ENCODE measurements at regions of chr19 and their contacts with region 1.

Region 1: DNA sequence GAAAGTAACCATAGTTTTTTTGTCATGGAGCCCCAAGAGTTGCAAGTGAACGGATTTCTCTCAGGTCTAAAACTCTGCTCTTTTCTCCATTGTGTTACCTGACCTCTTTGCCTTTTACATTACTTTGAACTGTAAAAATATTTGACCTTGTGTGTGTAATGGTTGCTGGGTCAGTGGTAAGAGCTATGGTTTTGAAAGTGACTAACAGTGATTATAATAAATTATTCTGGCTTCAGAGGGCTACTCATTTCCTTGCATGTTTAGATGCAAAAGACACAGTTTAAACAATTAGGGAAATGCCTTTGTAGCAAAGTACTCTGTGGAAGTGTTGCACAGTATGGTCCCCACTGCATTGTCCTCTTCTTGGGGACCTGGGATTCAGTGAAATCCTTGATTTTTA is 29.3 kb upstream of the PSG8 start:
- DNase-seq: peak; percentile 28
- ATAC-seq: peak; percentile 55
- H3K4me3 ChIP-seq: no peak overlapping the region
- H3K27ac ChIP-seq: no peak overlapping the region
- H3K4me1 ChIP-seq: peaks cover 6% of the 10 kb centered on the region; the same call in 1 of the 2 replicates
- H3K27me3 ChIP-seq: no peaks in the 10 kb centered on the region
- CTCF ChIP-seq: no peak
- POLR2A ChIP-seq: no peak
- RAD21 ChIP-seq: no peak

Region 2: GRCh38 chr19:42693764-42694350 is 100.9 kb before region 1 on chr19:
- CTCF ChIA-PET with region 1: no interaction called
- POLR2A ChIA-PET with region 1: no interaction called
- dilution Hi-C with region 1: no loop called
- in situ Hi-C with region 1: loop called (anchors 10 kb)
- intact Hi-C with region 1: loop called (anchors 5 kb)
- DNase-seq: peak; percentile 46
- ATAC-seq: peak; percentile 88
- H3K4me3 ChIP-seq: no peak overlapping the region
- H3K27ac ChIP-seq: no peak overlapping the region
- H3K4me1 ChIP-seq: no peaks in the 10 kb centered on the region
- H3K27me3 ChIP-seq: peaks cover 37% of the 10 kb centered on the region
- CTCF ChIP-seq: peak; percentile 72
- POLR2A ChIP-seq: no peak
- RAD21 ChIP-seq: peak; percentile 83

Region 3: GRCh38 chr19:42850981-42851717 is 56.4 kb after region 1 on chr19:
- CTCF ChIA-PET with region 1: no interaction called
- POLR2A ChIA-PET with region 1: no interaction called
- dilution Hi-C with region 1: no loop called
- in situ Hi-C with region 1: no loop called
- intact Hi-C with region 1: loop called (anchors 1 kb)
- DNase-seq: peak; percentile 98
- ATAC-seq: peak; percentile 95
- H3K4me3 ChIP-seq: no peak overlapping the region
- H3K27ac ChIP-seq: peak overlapping the region; percentile 89
- H3K4me1 ChIP-seq: peaks cover 23% of the 10 kb centered on the region
- H3K27me3 ChIP-seq: no peaks in the 10 kb centered on the region
- CTCF ChIP-seq: no peak
- POLR2A ChIP-seq: 0 out of 2 replicates have a peak, but pooled peaks have one; percentile 49
- RAD21 ChIP-seq: no peak

Region 4: DNA sequence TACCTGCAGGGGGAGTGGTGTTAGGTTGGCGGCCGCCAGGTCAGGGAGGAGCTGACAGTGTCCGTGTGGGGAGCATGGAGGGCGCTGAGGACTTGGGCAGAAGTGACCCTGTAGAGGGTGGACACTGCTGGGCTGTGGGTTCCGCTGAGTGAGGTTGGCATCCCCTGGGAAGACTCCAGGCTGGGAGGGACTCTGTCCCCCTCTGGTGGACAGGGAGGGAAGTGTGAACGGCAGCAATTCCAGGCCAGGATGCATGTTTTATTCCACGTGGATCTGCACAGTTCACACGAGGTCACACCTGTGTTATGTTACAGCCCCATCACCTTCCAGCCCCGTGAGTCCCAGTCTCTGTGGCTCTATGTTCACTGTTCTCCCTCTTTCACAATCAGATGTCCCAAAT is 86.5 kb after region 1 on chr19:
- CTCF ChIA-PET with region 1: interaction called, 4 read pairs
- POLR2A ChIA-PET with region 1: no interaction called
- dilution Hi-C with region 1: no loop called
- in situ Hi-C with region 1: no loop called
- intact Hi-C with region 1: loop called (anchors 1 kb)
- DNase-seq: peak; percentile 4
- ATAC-seq: no peak
- H3K4me3 ChIP-seq: no peak overlapping the region
- H3K27ac ChIP-seq: no peak overlapping the region
- H3K4me1 ChIP-seq: peaks cover 9% of the 10 kb centered on the region
- H3K27me3 ChIP-seq: no peaks in the 10 kb centered on the region
- CTCF ChIP-seq: peak; percentile 47
- POLR2A ChIP-seq: no peak
- RAD21 ChIP-seq: peak; percentile 52

Region 5: GRCh38 chr19:42919511-42920021 is 124.8 kb after region 1 on chr19:
- CTCF ChIA-PET with region 1: no interaction called
- POLR2A ChIA-PET with region 1: no interaction called
- dilution Hi-C with region 1: no loop called
- in situ Hi-C with region 1: no loop called
- intact Hi-C with region 1: loop called (anchors 1 kb)
- DNase-seq: no peak
- ATAC-seq: no peak
- H3K4me3 ChIP-seq: no peak overlapping the region
- H3K27ac ChIP-seq: no peak overlapping the region
- H3K4me1 ChIP-seq: no peaks in the 10 kb centered on the region
- H3K27me3 ChIP-seq: no peaks in the 10 kb centered on the region
- CTCF ChIP-seq: peak; percentile 29; the same call in 1 of the 2 replicates
- POLR2A ChIP-seq: no peak
- RAD21 ChIP-seq: peak; percentile 25

Region 6: GRCh38 chr19:43028861-43029260 is 234.1 kb after region 1 on chr19:
- CTCF ChIA-PET with region 1: no interaction called
- POLR2A ChIA-PET with region 1: no interaction called
- dilution Hi-C with region 1: no loop called
- in situ Hi-C with region 1: no loop called
- intact Hi-C with region 1: loop called (anchors 5 kb)
- DNase-seq: no peak
- ATAC-seq: no peak
- H3K4me3 ChIP-seq: no peak overlapping the region
- H3K27ac ChIP-seq: no peak overlapping the region
- H3K4me1 ChIP-seq: peaks cover under 1% of the 10 kb centered on the region; the same call in 1 of the 2 replicates
- H3K27me3 ChIP-seq: no peaks in the 10 kb centered on the region
- CTCF ChIP-seq: no peak
- POLR2A ChIP-seq: no peak
- RAD21 ChIP-seq: no peak

Region 7: GRCh38 chr19:43078311-43078710 is 283.5 kb after region 1 on chr19:
- CTCF ChIA-PET with region 1: no interaction called
- POLR2A ChIA-PET with region 1: no interaction called
- dilution Hi-C with region 1: no loop called
- in situ Hi-C with region 1: loop called (anchors 25 kb)
- intact Hi-C with region 1: no loop called
- DNase-seq: peak; percentile 81
- ATAC-seq: no peak
- H3K4me3 ChIP-seq: no peak overlapping the region
- H3K27ac ChIP-seq: no peak overlapping the region
- H3K4me1 ChIP-seq: no peaks in the 10 kb centered on the region
- H3K27me3 ChIP-seq: no peaks in the 10 kb centered on the region
- CTCF ChIP-seq: no peak
- POLR2A ChIP-seq: no peak
- RAD21 ChIP-seq: no peak

Measured in IMR-90 (cell line).